ENCODE measurements at regions of chr12 and their contacts with region 1.

Region 1: GRCh38 chr12:108664338-108665258 is 30.9 kb upstream of the SELPLG start:
- DNase-seq: peak; percentile 77
- ATAC-seq: peak; percentile 88

Region 2: GRCh38 chr12:108356835-108357806 is 307.5 kb before region 1 on chr12:
- intact Hi-C with region 1: no loop called
- DNase-seq: no peak
- ATAC-seq: no peak

Region 3: GRCh38 chr12:108744021-108744897 is 79.7 kb after region 1 on chr12:
- intact Hi-C with region 1: no loop called
- DNase-seq: no peak
- ATAC-seq: peak; percentile 36

Region 4: GRCh38 chr12:108803428-108804105 is 139.0 kb after region 1 on chr12:
- intact Hi-C with region 1: loop called (anchors 2 kb)
- DNase-seq: peak; percentile 60
- ATAC-seq: peak; percentile 84

Measured in Right ventricle myocardium superior (tissue), 1 donor.